Tibial artery (tissue), 4 donors: ENCODE measurements at regions of chr7 and their contacts with region 1.

Region 1: DNA sequence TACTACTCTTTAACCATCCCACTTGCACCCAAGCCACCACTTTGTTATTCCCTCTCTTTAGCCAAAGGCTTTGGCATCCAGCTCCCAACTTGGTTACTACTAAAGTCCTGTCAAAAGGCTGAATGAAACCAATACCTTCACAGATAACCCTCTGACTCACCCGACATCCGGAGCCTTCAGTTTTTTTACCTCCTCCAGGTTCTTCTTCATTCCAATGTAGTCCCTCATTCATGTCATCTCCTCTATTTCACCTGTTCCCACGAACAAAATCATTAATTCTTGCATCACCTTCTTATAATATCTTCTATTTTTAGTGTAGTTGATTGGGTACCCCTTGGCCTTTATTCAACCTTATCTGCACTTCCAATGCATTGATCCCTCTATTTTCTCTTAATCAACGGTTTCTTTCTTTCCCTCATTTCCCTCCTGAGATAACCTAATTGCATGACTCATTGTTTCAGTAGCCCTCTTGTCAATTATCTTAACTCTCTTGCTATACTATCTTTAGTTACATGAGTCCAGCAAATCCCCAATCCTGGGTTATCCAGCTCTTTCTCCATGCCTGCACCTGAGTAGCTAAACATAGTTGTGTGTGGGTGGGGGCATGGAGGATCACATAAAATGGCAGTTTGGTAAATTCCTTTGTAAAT is 87.2 kb upstream of the COL1A2 start:
- DNase-seq: no peak
- H3K4me3 ChIP-seq: no peak overlapping the region
- H3K27ac ChIP-seq: no peak overlapping the region
- H3K4me1 ChIP-seq: peaks cover 0 to 21% (median 14%) of the 10 kb centered on the region in 4 donors
- H3K27me3 ChIP-seq: no peaks in the 10 kb centered on the region
- CTCF ChIP-seq: no peak

Region 2: GRCh38 chr7:94348142-94348541 is 40.6 kb after region 1 on chr7:
- intact Hi-C with region 1: no loop called
- DNase-seq: peak in 1 of 2 donors; percentile 49
- H3K4me3 ChIP-seq: peak overlapping the region; percentile 0 to 10
- H3K27ac ChIP-seq: peak overlapping the region; percentile 48 to 74
- H3K4me1 ChIP-seq: peaks cover 0 to 24% (median 13%) of the 10 kb centered on the region in 4 donors
- H3K27me3 ChIP-seq: no peaks in the 10 kb centered on the region
- CTCF ChIP-seq: no peak

Region 3: GRCh38 chr7:94374231-94374630 is 66.7 kb after region 1 on chr7:
- intact Hi-C with region 1: loop called (anchors 5 kb)
- DNase-seq: peak; percentile 84 to 93
- H3K4me3 ChIP-seq: peak overlapping the region; percentile 20 to 27
- H3K27ac ChIP-seq: peak overlapping the region; percentile 78 to 84
- H3K4me1 ChIP-seq: peaks cover 0 to 49% (median 27%) of the 10 kb centered on the region in 4 donors
- H3K27me3 ChIP-seq: no peaks in the 10 kb centered on the region
- CTCF ChIP-seq: no peak